Calu3 (cell line): ENCODE measurements at regions of chr4 and their contacts with region 1.

Region 1: GRCh38 chr4:119212234-119212963 is at the start of gene USP53:
- DNase-seq: peak; percentile 96
- H3K4me3 Mint-ChIP-seq: peak within 1 kb of the TSS; percentile 100
- H3K27ac Mint-ChIP-seq: peak within 1 kb of the TSS; percentile 100
- H3K4me1 Mint-ChIP-seq: peaks cover 34% of the 10 kb centered on the region
- H3K27me3 Mint-ChIP-seq: no peaks in the 10 kb centered on the region
- CTCF ChIP-seq: no peak
- total RNA-seq, gene USP53: 29.2 and 31.0 TPM in 2 replicates

Region 2: DNA sequence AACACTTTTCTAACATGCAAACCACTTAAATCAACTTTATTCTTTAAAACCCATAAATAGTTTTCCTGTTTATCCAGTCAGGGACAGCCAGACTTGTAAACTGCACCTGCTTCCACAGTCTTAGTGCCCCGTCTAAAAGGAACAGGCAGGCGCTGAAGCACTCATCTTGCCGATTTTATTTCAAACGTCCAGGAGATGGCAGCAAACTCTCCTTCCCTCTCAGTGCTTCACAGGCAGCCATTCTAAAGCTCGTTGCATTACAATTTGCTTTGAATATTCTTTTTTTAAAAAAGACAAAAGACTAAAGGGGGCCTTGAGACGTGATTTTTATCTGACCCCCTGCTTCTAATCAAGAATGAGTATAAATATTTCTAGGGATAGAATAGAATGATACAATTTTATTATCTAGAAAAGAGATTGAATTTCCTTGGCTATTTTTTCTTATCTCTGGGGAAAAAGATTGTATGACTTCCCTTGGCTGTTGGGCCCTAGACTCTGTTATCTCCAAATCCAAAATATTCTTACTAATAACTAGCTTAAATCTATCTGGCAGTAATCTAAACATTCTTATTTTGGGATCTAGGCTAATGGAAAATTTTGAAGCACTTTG is 170.3 kb before region 1 on chr4:
- CTCF ChIA-PET with region 1: no interaction called
- intact Hi-C with region 1: loop called (anchors 5 kb)
- DNase-seq: peak; percentile 47
- H3K4me3 Mint-ChIP-seq: no peak overlapping the region
- H3K27ac Mint-ChIP-seq: no peak overlapping the region
- H3K4me1 Mint-ChIP-seq: peaks cover 7% of the 10 kb centered on the region
- H3K27me3 Mint-ChIP-seq: no peaks in the 10 kb centered on the region
- CTCF ChIP-seq: peak; percentile 53

Region 3: DNA sequence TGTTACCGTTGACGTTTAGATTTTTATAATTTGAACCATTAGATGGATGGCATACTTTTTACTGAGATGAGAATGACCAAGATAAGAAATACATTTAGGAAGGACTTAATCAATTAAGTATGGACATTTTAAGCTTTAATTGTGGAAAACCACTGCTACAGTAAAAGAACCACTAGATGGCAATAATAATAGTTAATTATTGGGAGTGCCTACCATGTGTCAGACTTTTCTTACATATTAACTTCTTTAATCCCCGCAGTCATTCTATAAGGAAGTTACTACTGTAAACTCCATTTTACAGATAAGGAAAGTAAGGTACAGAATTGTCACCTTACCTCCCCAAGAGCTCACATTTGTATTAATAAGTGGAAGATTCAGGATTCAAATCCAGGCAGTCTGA is 125.3 kb before region 1 on chr4:
- CTCF ChIA-PET with region 1: interaction called, 14 read pairs
- intact Hi-C with region 1: loop called (anchors 5 kb)
- DNase-seq: no peak
- H3K4me3 Mint-ChIP-seq: no peak overlapping the region
- H3K27ac Mint-ChIP-seq: peak overlapping the region; percentile 60
- H3K4me1 Mint-ChIP-seq: peaks cover 50% of the 10 kb centered on the region
- H3K27me3 Mint-ChIP-seq: no peaks in the 10 kb centered on the region
- CTCF ChIP-seq: no peak

Region 4: DNA sequence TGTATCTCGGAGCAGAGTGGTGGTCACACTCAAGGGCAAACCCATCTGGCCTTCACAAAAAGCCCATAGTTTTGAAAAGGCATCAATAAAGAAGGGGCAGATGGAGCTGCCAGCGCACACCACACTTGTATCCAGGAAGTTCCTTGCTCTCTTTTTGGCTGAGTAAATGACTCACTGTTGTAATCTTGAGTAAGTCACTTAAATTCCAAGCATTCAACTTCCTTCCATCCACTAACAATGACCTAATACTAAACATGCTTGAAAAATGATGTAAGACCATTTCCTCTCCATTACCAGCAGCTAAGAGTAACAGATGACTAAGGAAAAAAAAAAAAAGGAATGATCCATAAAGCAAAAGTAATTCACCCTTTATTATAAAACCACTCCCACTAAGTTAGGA is 109.1 kb before region 1 on chr4:
- CTCF ChIA-PET with region 1: interaction called, 11 read pairs
- intact Hi-C with region 1: loop called (anchors 2 kb)
- DNase-seq: peak; percentile 41
- H3K4me3 Mint-ChIP-seq: peak overlapping the region; percentile 47
- H3K27ac Mint-ChIP-seq: peak overlapping the region; percentile 97
- H3K4me1 Mint-ChIP-seq: peaks cover 51% of the 10 kb centered on the region
- H3K27me3 Mint-ChIP-seq: no peaks in the 10 kb centered on the region
- CTCF ChIP-seq: no peak

Region 5: DNA sequence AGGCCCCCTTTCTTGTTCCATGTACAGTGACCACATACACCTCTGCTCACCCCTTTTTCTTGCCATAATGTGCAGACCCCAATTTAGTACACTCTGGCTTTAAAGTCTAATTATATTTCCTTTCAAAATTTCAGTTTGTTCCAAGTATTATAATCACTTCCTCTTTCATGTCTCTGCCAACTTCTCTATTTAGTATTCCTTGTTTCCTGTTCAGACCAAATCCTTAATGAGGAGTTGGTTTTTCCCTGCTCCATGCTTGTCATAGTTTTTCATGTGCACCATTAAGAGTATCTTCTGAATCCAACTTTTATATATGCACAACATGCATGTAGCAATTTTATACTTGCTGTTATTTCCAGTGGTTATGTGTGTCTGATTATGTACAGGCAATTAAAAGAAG is 32.4 kb after region 1 on chr4:
- CTCF ChIA-PET with region 1: no interaction called
- intact Hi-C with region 1: no loop called
- DNase-seq: no peak
- H3K4me3 Mint-ChIP-seq: no peak overlapping the region
- H3K27ac Mint-ChIP-seq: no peak overlapping the region
- H3K4me1 Mint-ChIP-seq: peaks cover 10% of the 10 kb centered on the region
- H3K27me3 Mint-ChIP-seq: no peaks in the 10 kb centered on the region
- CTCF ChIP-seq: no peak

Region 6: GRCh38 chr4:119286377-119287002 is 74.1 kb after region 1 on chr4:
- CTCF ChIA-PET with region 1: no interaction called
- intact Hi-C with region 1: loop called (anchors 10 kb)
- DNase-seq: peak; percentile 10
- H3K4me3 Mint-ChIP-seq: no peak overlapping the region
- H3K27ac Mint-ChIP-seq: no peak overlapping the region
- H3K4me1 Mint-ChIP-seq: peaks cover 23% of the 10 kb centered on the region
- H3K27me3 Mint-ChIP-seq: no peaks in the 10 kb centered on the region
- CTCF ChIP-seq: no peak